ENCODE measurements at regions of chr1 and their contacts with region 1.

Region 1: DNA sequence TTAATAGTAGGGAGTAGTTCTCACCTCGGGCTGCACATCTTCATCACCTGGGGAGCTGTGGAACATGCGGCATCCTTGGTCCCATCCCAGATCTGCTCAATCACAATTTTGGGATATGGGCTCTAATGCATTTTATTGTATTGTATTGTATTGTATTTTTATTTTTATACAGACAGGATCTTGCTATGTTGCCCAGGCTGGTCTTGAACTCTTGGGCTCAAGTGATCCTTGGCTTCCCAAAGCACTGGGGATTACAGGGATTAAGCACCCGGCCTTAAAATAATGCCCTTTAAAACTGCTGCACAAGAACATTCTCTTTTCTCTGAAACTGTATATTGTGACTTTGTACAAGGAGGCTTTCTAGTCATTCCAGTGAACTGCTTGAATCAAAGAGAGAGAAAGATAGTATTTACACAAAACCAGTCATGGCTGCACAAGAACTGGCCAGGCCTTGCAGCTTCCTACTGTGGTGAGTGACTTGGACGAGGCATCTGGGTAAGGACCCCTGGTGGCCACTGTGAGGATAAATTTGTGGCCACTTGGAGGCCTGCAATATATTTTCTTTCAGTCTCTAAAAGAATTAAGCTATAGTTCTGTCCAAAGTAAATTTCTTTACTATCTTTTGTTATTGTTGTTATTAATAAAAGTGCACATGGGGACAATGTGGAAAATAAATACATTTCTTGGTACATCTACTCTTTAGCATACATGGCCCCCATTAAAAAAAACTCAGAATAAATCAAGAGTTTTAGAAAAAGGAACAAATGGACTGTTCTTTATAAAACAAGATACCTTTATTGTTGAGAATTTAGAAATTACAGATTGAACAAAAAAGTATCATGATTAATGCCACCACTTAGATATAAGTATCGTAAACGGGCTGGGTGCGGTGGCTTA is 48.0 kb downstream of the TBCE start:
- ATAC-seq: peak in 6 of 8 experiments; percentile 63 to 86 (median 80)
- H3K4me3 ChIP-seq: no peak overlapping the region
- H3K27ac ChIP-seq: no peak overlapping the region
- H3K4me1 ChIP-seq: no peaks in the 10 kb centered on the region

Region 2: DNA sequence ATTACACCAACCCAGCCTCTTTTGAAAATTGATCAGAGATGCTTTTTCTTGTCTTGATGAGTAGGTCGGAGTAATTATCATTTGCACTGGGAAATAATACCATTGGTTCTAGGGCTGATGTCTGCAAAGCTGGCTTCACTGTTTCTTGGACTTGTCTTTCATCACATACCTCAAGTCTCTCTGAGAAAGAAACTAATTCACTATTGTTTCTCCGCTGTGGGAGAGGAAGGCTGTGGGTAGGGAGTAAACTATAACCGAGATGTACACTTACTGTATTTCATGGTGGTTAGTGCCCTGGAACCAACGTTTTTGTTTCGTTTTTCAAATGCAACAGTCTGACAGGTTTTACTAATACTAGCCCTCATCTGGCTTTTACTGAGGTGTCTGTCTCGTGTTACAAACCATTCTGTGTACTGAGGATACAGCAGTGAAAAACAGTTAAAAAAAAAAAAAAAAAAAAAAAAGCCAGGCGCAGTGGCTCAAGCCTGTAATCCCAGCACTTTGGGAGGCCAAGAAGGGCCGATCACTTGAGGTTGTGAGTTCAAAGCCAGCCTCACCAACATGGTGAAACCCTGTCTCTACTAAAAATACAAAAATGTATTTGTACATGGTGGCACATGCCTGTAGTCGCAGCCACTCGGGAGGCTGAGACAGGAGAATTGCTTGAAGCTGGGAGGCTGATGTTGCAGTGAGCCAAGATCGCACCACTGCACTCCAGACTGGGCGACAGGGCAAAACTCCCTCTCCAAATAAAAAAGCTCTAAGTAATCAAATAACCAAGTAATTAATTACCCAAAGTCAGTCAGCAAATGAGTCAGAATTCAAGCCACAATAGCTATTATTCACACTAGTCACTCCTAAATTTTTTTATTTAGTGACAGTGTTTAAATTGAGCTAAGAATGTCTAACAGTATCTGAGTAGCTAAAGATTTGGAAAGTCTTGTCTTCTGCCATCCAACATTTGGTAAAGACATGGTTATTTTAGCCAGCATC is 309.9 kb before region 1 on chr1:
- in situ Hi-C with region 1: no loop called
- ATAC-seq: peak in 1 of 8 experiments; percentile 3
- H3K4me3 ChIP-seq: no peak overlapping the region
- H3K27ac ChIP-seq: no peak overlapping the region
- H3K4me1 ChIP-seq: peaks cover 6 to 9% of the 10 kb centered on the region in 2 donors

Region 3: GRCh38 chr1:235206533-235207208 is 208.6 kb before region 1 on chr1:
- in situ Hi-C with region 1: loop called in 1 of 9 experiments (anchors 25 kb)
- ATAC-seq: no peak
- H3K4me3 ChIP-seq: no peak overlapping the region
- H3K27ac ChIP-seq: no peak overlapping the region
- H3K4me1 ChIP-seq: no peaks in the 10 kb centered on the region

Measured in motor neuron (in vitro differentiated cells).